ENCODE measurements at regions of chr13 and their contacts with region 1.

Region 1: DNA sequence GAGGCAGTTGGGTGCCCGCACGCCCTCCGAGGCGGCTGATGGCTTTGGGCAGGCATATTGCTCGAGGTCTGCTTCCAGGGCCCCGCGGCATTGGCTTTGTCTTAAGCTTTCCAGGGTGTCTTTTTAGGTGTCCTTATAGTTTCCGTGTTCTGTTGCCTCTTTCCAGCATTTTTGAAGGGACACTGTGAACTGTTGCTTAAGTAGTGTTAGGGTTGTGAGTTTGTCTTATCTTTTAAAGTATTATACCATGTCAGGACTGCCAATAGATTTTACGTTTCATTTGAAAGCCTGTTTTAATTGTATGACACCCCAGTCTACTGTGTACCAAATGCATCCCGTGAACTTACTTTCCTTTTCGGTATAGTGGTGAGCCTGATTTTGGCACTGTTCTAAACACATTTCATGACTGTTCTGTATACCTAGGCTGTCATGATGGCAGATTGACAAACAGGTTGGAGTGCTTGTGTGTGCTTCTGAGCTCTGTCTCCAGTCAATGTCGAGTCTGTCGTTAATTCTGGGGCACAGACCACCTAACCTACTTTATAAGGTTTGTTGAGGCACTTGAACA is 656 bp downstream of the PCCA start:
- DNase-seq: no peak

Region 2: GRCh38 chr13:99661791-99662190 is 427.8 kb before region 1 on chr13:
- intact Hi-C with region 1: loop called (anchors 10 kb)
- DNase-seq: no peak

Region 3: DNA sequence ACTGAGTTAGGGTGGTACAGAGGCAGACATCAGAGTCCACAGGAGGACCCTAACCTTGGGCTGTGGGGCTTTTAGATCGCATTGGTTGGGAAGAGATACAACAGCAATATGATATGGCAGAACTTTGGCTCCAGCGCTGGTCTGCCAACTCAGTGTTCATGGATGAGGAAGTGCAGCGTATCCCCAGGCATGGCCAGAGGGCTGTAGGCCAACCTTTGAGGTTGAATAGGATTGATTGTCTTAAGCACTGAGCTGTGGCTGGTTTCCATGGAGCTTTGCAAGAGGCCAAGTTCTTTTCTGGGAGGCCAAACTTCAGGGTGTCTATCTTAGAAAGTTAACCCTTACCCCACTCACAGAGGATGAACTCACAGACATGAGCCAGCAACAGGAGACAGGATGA is 729.2 kb after region 1 on chr13:
- intact Hi-C with region 1: no loop called
- DNase-seq: peak in 5 of 10 donors; percentile 18 to 85 (median 22)